ENCODE measurements at regions of chr13 and their contacts with region 1.

Region 1: DNA sequence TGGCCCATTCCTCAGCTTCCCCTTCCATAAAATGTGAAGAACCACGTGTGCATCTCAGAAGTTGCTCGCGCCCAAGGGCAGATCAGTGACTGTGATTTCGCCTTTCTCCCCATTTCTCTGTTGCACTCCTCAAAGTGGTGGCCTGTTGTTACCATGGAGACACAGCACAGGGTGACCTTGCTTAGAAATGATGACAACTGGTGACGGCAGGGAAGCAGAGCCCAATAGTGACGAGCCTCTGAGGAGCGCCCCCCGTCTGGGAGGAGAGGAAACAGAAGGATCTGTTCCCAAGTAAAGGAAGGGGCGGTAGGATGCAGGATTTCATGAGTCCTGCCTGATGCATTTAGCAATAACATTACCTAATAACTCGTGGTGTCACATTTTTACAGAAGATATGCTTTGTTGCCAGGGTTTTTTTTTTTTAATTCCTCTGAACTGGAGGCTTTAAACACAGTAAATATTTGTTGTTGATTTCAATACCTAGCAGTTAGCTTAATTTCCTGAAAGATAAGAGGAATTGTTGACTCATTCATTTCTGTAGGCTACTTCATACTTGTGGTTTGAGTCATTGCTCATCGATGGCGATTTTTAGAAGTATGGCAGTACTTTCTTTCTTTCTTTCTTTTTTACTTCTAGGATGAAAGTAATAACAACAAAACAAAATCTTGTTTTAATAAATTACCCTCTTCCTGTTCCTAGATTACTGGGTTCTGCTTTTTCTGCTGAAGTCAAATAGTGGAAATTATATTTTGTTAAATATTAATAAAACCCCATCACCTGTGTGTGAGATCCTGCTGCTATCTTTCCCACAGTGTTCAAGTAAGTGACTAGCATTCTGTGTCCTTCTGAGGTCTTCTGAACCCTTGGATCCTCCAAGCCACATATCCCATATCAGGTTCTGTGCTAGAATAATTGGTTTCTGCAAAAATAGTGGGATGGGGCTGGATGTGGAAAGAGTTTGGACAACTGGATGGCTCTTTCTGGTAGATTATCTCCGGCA is 36.0 kb downstream of the MBNL2 start:
- DNase-seq: peak; percentile 67
- H3K4me3 Mint-ChIP-seq: peak overlapping the region; percentile 65
- H3K27ac Mint-ChIP-seq: peak overlapping the region; percentile 93
- H3K4me1 Mint-ChIP-seq: peaks cover 71% of the 10 kb centered on the region
- H3K27me3 Mint-ChIP-seq: no peaks in the 10 kb centered on the region

Region 2: GRCh38 chr13:97141564-97142005 is 116.5 kb before region 1 on chr13:
- intact Hi-C with region 1: loop called (anchors 5 kb)
- DNase-seq: peak; percentile 60
- H3K4me3 Mint-ChIP-seq: no peak overlapping the region
- H3K27ac Mint-ChIP-seq: peak overlapping the region; percentile 3
- H3K4me1 Mint-ChIP-seq: peaks cover 11% of the 10 kb centered on the region
- H3K27me3 Mint-ChIP-seq: peaks cover 27% of the 10 kb centered on the region

Region 3: DNA sequence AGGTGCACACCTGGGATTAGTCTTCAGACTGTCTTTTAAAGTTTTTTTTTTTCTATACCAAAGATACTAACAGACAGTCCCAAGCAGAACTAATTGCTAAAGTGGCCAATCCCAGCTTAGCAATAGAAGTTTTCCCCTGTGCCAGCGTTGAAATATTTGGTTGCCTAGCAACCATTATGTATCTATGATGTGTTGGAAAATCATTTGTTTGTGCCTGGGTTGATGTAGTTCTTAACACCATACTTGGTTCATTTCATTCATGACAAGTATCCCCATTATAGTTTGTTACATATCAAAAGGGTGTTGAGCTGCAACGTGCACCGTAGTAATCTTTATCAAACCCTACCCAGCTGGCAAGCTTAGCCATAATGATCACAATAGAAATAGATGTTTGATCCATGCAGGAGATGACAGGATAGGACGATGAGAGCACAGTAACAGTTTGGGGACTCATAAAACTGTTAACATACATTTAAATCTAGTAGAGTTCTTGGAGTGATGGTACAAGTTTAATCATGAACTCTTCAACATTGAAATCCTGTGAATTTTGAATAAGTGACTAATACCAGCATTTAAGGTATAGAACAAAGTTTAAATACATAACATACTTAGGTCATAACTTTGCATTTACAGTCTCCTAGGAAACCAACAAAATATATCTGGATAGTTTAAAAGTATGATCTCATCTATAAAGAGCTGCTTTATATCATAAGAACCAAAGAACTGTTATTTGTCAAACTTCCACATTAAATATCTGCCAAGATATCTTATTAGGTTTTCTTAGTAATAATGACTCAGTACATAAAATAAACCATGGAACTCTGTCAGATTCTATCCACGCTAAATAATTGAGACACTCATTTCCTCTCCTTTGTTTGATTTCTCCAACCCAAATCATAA is 37.4 kb after region 1 on chr13:
- intact Hi-C with region 1: loop called (anchors 1 kb)
- DNase-seq: no peak
- H3K4me3 Mint-ChIP-seq: no peak overlapping the region
- H3K27ac Mint-ChIP-seq: no peak overlapping the region
- H3K4me1 Mint-ChIP-seq: peaks cover 16% of the 10 kb centered on the region
- H3K27me3 Mint-ChIP-seq: no peaks in the 10 kb centered on the region

Region 4: DNA sequence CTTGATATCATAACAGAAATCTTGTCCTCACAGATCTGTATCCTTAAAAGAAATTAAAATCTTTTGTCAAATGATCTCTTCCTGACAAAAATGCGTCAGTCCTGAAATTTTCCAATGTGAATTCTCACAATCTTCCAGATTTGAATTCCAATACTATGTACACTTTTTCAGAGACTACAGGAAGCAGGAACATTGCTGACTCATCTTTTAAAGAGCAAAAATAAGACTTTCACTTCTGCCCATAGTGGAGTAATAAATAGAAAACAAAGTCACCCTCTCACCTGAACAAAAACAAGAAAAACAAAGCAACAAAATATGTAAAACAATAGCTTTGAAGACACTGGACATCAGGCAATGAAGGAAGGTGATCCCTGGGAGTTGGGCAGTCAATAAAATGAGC is 528.4 kb after region 1 on chr13:
- intact Hi-C with region 1: no loop called
- DNase-seq: no peak
- H3K4me3 Mint-ChIP-seq: no peak overlapping the region
- H3K27ac Mint-ChIP-seq: no peak overlapping the region
- H3K4me1 Mint-ChIP-seq: no peaks in the 10 kb centered on the region
- H3K27me3 Mint-ChIP-seq: no peaks in the 10 kb centered on the region